SK-N-SH (cell line): ENCODE measurements at regions of chr13 and their contacts with region 1.

Region 1: DNA sequence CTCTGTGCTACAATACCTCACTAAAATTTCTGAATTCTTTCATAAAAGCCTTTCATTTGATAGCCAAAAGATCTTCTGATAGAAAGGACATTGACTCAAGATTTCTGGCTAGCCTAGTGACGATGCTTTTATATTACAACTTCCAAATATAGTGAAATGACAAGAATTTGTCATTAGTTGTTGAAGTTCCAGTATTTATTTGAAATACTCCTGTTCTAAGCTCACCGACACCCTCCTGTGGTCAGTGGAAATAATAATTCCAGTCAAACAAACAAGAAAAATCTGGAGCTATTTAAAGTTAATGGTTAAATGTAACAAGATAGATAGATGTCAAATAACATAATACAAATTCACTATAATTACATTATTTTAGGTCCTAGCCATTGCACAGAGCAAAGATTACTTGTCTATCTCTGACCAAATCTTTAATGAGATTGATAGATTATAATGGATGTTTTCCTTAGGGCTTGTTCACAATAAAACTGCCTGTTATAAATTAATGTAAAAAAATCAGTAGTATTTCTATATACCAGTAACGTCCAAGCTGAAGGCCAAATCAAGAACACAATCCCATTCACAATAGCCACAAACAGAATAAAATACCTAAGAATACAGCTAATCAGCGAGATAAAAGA is 195.5 kb downstream of the RGCC start:
- DNase-seq: peak; percentile 60
- H3K4me3 ChIP-seq: no peak overlapping the region
- H3K27ac ChIP-seq: no peak overlapping the region
- H3K4me1 ChIP-seq: peaks cover 3 to 11% of the 10 kb centered on the region in 2 experiments
- H3K27me3 ChIP-seq: no peaks in the 10 kb centered on the region
- CTCF ChIP-seq: peak; percentile 83
- EP300 ChIP-seq: peak in 1 of 2 experiments; percentile 16; a peak in 1 of 4 replicates
- RAD21 ChIP-seq: peak; percentile 91

Region 2: DNA sequence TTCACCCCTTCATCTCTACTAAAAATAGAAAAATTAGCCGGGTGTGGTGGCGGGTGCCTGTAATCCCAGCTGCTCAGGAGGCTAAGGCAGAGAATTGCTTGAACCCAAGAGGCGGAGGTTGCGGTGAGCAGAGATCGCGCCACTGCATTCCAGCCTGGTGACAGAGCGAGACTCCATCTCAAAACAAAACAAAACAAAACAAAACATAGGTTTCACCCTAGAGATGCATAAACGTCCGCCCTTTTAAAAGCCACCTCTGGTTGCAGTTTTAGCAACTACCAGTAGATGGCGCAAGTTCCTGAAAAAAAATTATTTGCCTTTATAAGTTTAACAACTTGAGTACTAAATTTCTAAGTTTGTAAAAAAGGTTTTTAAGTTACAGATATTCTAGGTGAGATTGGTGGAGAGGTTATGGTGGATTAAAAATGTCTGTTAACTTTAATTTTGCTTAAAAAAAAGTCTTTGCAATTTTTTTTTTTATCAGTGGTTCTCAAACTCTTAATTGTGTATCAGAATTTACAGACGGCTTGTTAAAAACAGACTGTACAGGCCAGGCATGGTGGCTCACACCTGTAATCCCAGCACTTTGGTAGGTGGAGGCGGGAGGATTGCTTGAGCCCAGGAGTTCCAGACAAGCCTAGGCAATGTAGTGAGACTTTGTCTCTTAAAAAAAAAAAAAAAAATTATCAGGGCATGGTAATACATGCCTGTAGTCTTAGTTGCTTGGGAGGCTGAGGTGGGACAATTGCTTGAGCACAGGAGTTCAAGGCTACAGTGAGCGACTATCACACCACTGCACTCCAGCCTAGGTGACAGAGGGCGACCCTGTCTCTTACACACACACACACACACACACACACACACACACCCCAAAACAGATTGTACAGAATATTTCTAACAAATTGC is 299.7 kb before region 1 on chr13:
- CTCF ChIA-PET with region 1: interaction called, 14 read pairs
- POLR2A ChIA-PET with region 1: no interaction called
- DNase-seq: peak; percentile 55
- H3K4me3 ChIP-seq: peak overlapping the region in 1 of 2 experiments; percentile 36; a peak in 1 of 4 replicates
- H3K27ac ChIP-seq: no peak overlapping the region; a peak in 1 of 4 replicates
- H3K4me1 ChIP-seq: no peaks in the 10 kb centered on the region
- H3K27me3 ChIP-seq: no peaks in the 10 kb centered on the region
- CTCF ChIP-seq: peak; percentile 95
- EP300 ChIP-seq: no peak
- RAD21 ChIP-seq: peak; percentile 65

Region 3: GRCh38 chr13:41411522-41411921 is 241.3 kb before region 1 on chr13:
- CTCF ChIA-PET with region 1: interaction called, 11 read pairs
- POLR2A ChIA-PET with region 1: no interaction called
- DNase-seq: no peak
- H3K4me3 ChIP-seq: no peak overlapping the region
- H3K27ac ChIP-seq: no peak overlapping the region
- H3K4me1 ChIP-seq: no peaks in the 10 kb centered on the region
- H3K27me3 ChIP-seq: no peaks in the 10 kb centered on the region
- CTCF ChIP-seq: peak; percentile 34
- EP300 ChIP-seq: no peak
- RAD21 ChIP-seq: peak; percentile 59

Region 4: DNA sequence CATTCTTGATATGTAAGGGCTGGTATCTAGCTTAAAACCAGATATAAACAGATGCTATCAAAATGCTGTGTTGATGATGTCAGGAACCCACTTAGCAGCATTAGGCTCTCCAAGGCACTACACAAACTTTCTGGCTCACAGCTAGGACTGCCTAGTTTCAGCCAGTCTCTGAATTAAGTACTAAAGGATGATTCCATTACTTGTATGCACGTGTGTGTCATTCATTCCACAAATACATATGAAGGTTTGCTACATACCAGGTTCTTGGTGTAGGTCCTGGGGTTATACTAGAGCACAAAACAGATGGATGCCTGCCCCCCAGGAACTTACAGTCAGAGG is 44.0 kb before region 1 on chr13:
- CTCF ChIA-PET with region 1: interaction called, 12 read pairs
- POLR2A ChIA-PET with region 1: no interaction called
- DNase-seq: peak; percentile 29
- H3K4me3 ChIP-seq: no peak overlapping the region
- H3K27ac ChIP-seq: peak overlapping the region in 1 of 2 experiments; percentile 91; a peak in 2 of 4 replicates
- H3K4me1 ChIP-seq: peaks cover 0 to 28% of the 10 kb centered on the region in 2 experiments; a peak in 3 of 4 replicates
- H3K27me3 ChIP-seq: no peaks in the 10 kb centered on the region
- CTCF ChIP-seq: no peak
- EP300 ChIP-seq: peak in 1 of 2 experiments; percentile 68; a peak in 2 of 4 replicates
- RAD21 ChIP-seq: 0 out of 2 replicates have a peak, but pooled peaks have one; percentile 5

Region 5: DNA sequence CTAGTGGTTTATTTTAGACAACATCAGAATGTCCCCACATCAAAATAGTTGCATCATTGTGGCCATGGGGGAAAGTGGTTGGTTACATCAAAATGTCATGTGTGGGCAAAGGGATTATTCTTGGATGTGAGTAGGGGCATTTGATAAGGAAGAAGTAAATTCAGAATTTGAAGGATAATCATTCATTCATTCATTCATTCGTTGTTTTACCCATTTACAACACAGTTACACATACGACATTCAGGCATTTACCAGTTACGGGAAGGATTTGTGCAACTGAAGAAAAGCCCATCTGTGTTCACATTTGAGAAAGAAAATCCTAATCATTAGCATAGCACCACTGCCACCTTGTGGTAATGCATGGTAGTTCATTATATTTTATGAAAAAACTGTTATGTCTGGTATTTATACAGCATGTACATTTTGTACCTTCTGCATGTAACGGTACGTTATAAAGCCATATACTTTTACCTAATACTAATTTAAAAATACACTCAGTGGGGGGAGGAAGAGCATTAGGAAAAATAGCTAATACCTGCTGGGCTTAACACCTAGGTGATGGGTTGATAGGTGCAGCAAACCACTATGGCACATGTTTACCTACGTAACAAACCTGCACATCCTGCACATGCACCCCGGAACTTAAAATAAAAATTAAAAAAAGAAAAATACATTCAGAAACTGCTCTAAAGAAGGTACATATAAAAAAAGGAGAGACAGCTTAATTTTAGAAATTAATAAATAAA is 457.7 kb after region 1 on chr13:
- CTCF ChIA-PET with region 1: interaction called, 32 read pairs
- POLR2A ChIA-PET with region 1: no interaction called
- DNase-seq: peak; percentile 55
- H3K4me3 ChIP-seq: no peak overlapping the region; a peak in 1 of 4 replicates
- H3K27ac ChIP-seq: no peak overlapping the region
- H3K4me1 ChIP-seq: peaks cover 9 to 11% of the 10 kb centered on the region in 2 experiments; a peak in 3 of 4 replicates
- H3K27me3 ChIP-seq: no peaks in the 10 kb centered on the region
- CTCF ChIP-seq: peak; percentile 81
- EP300 ChIP-seq: no peak
- RAD21 ChIP-seq: peak; percentile 94